ENCODE measurements at regions of chr18 and their contacts with region 1.

Region 1: GRCh38 chr18:77000527-77000926 is 132.1 kb downstream of the MBP start:
- DNase-seq: peak; percentile 54
- H3K4me3 ChIP-seq: no peak overlapping the region
- H3K27ac ChIP-seq: no peak overlapping the region
- H3K4me1 ChIP-seq: no peaks in the 10 kb centered on the region
- H3K27me3 ChIP-seq: no peaks in the 10 kb centered on the region
- CTCF ChIP-seq: peak; percentile 98

Region 2: GRCh38 chr18:76892832-76893231 is 107.7 kb before region 1 on chr18:
- intact Hi-C with region 1: no loop called
- DNase-seq: no peak
- H3K4me3 ChIP-seq: no peak overlapping the region
- H3K27ac ChIP-seq: no peak overlapping the region
- H3K4me1 ChIP-seq: no peaks in the 10 kb centered on the region
- H3K27me3 ChIP-seq: no peaks in the 10 kb centered on the region
- CTCF ChIP-seq: no peak

Region 3: GRCh38 chr18:77054606-77055428 is 54.3 kb after region 1 on chr18:
- intact Hi-C with region 1: loop called (anchors 5 kb)
- DNase-seq: peak; percentile 71
- H3K4me3 ChIP-seq: no peak overlapping the region
- H3K27ac ChIP-seq: peak overlapping the region; percentile 69
- H3K4me1 ChIP-seq: peaks cover 9% of the 10 kb centered on the region
- H3K27me3 ChIP-seq: no peaks in the 10 kb centered on the region
- CTCF ChIP-seq: peak; percentile 22

Region 4: GRCh38 chr18:77207540-77207939 is 207.0 kb after region 1 on chr18:
- intact Hi-C with region 1: loop called (anchors 2 kb)
- DNase-seq: peak; percentile 54
- H3K4me3 ChIP-seq: no peak overlapping the region
- H3K27ac ChIP-seq: no peak overlapping the region
- H3K4me1 ChIP-seq: no peaks in the 10 kb centered on the region
- H3K27me3 ChIP-seq: no peaks in the 10 kb centered on the region
- CTCF ChIP-seq: peak; percentile 43

Region 5: DNA sequence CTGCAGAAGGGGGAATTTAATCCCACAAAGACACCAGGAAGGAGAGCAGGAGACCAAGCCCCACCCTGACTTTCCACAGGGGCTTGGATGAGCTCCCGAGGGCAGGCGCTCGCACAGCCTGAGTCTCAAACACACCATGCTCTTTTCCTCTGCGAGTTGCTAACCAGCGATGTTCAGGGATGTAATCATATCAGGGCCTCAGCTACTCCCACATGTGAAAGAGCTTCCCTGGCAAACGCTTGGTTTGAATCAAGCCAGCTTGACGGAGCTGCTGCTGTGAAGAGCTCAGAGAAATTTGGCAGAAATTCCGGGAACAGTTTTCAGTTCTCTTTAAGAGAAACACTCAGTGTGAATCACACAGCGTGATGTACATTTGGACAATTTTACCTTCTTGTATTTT is 634.9 kb after region 1 on chr18:
- intact Hi-C with region 1: no loop called
- DNase-seq: no peak
- H3K4me3 ChIP-seq: no peak overlapping the region
- H3K27ac ChIP-seq: no peak overlapping the region
- H3K4me1 ChIP-seq: no peaks in the 10 kb centered on the region
- H3K27me3 ChIP-seq: no peaks in the 10 kb centered on the region
- CTCF ChIP-seq: no peak

Region 6: DNA sequence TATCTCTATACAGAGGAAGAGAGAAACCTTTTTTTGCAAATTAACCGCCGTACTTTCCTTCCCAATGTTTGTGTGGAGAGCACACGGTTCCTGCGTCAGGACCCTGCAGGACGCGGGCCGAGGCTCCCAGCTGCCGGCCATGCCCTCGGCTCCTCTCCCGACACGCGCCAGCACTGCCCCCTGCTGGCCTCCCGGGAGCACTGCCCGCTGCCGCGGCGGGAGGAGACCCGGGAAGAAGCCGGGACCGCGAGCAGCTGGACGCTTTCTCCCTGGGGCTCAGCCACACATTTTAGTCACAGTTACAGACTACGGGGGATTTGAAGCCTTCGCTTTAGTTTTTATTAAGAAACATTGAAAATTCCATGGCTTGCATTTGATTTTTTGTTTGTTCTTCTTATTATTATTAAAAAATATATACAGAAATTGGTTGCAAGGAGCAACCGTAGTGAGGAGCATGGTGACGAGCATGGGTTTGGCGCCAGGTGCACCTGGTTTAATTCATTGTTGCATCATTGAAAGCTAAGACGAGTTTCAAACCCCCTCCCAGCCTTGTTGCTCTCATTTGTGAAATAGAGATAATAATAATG is 650.4 kb after region 1 on chr18:
- intact Hi-C with region 1: loop called (anchors 5 kb)
- DNase-seq: peak; percentile 70
- H3K4me3 ChIP-seq: no peak overlapping the region
- H3K27ac ChIP-seq: no peak overlapping the region
- H3K4me1 ChIP-seq: no peaks in the 10 kb centered on the region
- H3K27me3 ChIP-seq: no peaks in the 10 kb centered on the region
- CTCF ChIP-seq: peak; percentile 97

Measured in colonic mucosa (tissue), 4 donors.